Caco-2 (cell line): ENCODE measurements at regions of chr12 and their contacts with region 1.

Region 1: GRCh38 chr12:26434299-26435068 is 239.1 kb downstream of the SSPN start:
- DNase-seq: peak; percentile 72 to 77
- H3K4me3 ChIP-seq: no peak overlapping the region
- H3K4me3 Mint-ChIP-seq: peak overlapping the region; percentile 16
- H3K27ac Mint-ChIP-seq: peak overlapping the region; percentile 45
- H3K4me1 ChIP-seq: peaks cover 27% of the 10 kb centered on the region
- H3K4me1 Mint-ChIP-seq: peaks cover 17% of the 10 kb centered on the region
- H3K27me3 ChIP-seq: no peaks in the 10 kb centered on the region
- H3K27me3 Mint-ChIP-seq: no peaks in the 10 kb centered on the region
- CTCF ChIP-seq: peak; percentile 89 to 97

Region 2: GRCh38 chr12:26246483-26247111 is 187.9 kb before region 1 on chr12:
- CTCF ChIA-PET with region 1: no interaction called
- POLR2A ChIA-PET with region 1: no interaction called
- intact Hi-C with region 1: no loop called
- DNase-seq: peak; percentile 59 to 81
- H3K4me3 ChIP-seq: no peak overlapping the region
- H3K4me3 Mint-ChIP-seq: no peak overlapping the region
- H3K27ac Mint-ChIP-seq: peak overlapping the region; percentile 82
- H3K4me1 ChIP-seq: peaks cover 11% of the 10 kb centered on the region; the same call in 1 of the 2 replicates
- H3K4me1 Mint-ChIP-seq: peaks cover 8% of the 10 kb centered on the region
- H3K27me3 ChIP-seq: no peaks in the 10 kb centered on the region
- H3K27me3 Mint-ChIP-seq: no peaks in the 10 kb centered on the region
- CTCF ChIP-seq: no peak

Region 3: GRCh38 chr12:26402648-26403047 is 31.8 kb before region 1 on chr12:
- CTCF ChIA-PET with region 1: no interaction called
- POLR2A ChIA-PET with region 1: no interaction called
- intact Hi-C with region 1: no loop called
- DNase-seq: peak; percentile 46 to 47
- H3K4me3 ChIP-seq: no peak overlapping the region
- H3K4me3 Mint-ChIP-seq: no peak overlapping the region
- H3K27ac Mint-ChIP-seq: no peak overlapping the region
- H3K4me1 ChIP-seq: no peaks in the 10 kb centered on the region
- H3K4me1 Mint-ChIP-seq: no peaks in the 10 kb centered on the region
- H3K27me3 ChIP-seq: no peaks in the 10 kb centered on the region
- H3K27me3 Mint-ChIP-seq: no peaks in the 10 kb centered on the region
- CTCF ChIP-seq: peak; percentile 38 to 43

Region 4: GRCh38 chr12:26524862-26525465 is 90.5 kb after region 1 on chr12:
- CTCF ChIA-PET with region 1: no interaction called
- POLR2A ChIA-PET with region 1: no interaction called
- intact Hi-C with region 1: loop called (anchors 1 kb)
- DNase-seq: peak in 1 of 2 experiments; percentile 60
- H3K4me3 ChIP-seq: no peak overlapping the region
- H3K4me3 Mint-ChIP-seq: no peak overlapping the region
- H3K27ac Mint-ChIP-seq: no peak overlapping the region
- H3K4me1 ChIP-seq: 0 out of 2 replicates have a peak, but pooled peaks cover 6% of the 10 kb centered on the region
- H3K4me1 Mint-ChIP-seq: peaks cover 14% of the 10 kb centered on the region
- H3K27me3 ChIP-seq: no peaks in the 10 kb centered on the region
- H3K27me3 Mint-ChIP-seq: no peaks in the 10 kb centered on the region
- CTCF ChIP-seq: peak; percentile 46 to 87

Region 5: GRCh38 chr12:26614020-26614616 is 179.6 kb after region 1 on chr12:
- CTCF ChIA-PET with region 1: interaction called, 6 read pairs
- POLR2A ChIA-PET with region 1: no interaction called
- intact Hi-C with region 1: loop called (anchors 1 kb)
- DNase-seq: peak in 1 of 2 experiments; percentile 50
- H3K4me3 ChIP-seq: no peak overlapping the region
- H3K4me3 Mint-ChIP-seq: no peak overlapping the region
- H3K27ac Mint-ChIP-seq: peak overlapping the region; percentile 26
- H3K4me1 ChIP-seq: peaks cover 5% of the 10 kb centered on the region; the same call in 1 of the 2 replicates
- H3K4me1 Mint-ChIP-seq: peaks cover 15% of the 10 kb centered on the region
- H3K27me3 ChIP-seq: no peaks in the 10 kb centered on the region
- H3K27me3 Mint-ChIP-seq: no peaks in the 10 kb centered on the region
- CTCF ChIP-seq: peak; percentile 61 to 65

Region 6: GRCh38 chr12:26701604-26702215 is 267.2 kb after region 1 on chr12:
- CTCF ChIA-PET with region 1: no interaction called
- POLR2A ChIA-PET with region 1: no interaction called
- intact Hi-C with region 1: loop called (anchors 1 kb)
- DNase-seq: peak in 1 of 2 experiments; percentile 30
- H3K4me3 ChIP-seq: no peak overlapping the region
- H3K4me3 Mint-ChIP-seq: no peak overlapping the region
- H3K27ac Mint-ChIP-seq: no peak overlapping the region
- H3K4me1 ChIP-seq: peaks cover 23% of the 10 kb centered on the region
- H3K4me1 Mint-ChIP-seq: peaks cover 6% of the 10 kb centered on the region
- H3K27me3 ChIP-seq: no peaks in the 10 kb centered on the region
- H3K27me3 Mint-ChIP-seq: no peaks in the 10 kb centered on the region
- CTCF ChIP-seq: peak; percentile 61 to 71